Heart left ventricle (tissue), 16 donors: ENCODE measurements at regions of chr5 and their contacts with region 1.

Region 1: DNA sequence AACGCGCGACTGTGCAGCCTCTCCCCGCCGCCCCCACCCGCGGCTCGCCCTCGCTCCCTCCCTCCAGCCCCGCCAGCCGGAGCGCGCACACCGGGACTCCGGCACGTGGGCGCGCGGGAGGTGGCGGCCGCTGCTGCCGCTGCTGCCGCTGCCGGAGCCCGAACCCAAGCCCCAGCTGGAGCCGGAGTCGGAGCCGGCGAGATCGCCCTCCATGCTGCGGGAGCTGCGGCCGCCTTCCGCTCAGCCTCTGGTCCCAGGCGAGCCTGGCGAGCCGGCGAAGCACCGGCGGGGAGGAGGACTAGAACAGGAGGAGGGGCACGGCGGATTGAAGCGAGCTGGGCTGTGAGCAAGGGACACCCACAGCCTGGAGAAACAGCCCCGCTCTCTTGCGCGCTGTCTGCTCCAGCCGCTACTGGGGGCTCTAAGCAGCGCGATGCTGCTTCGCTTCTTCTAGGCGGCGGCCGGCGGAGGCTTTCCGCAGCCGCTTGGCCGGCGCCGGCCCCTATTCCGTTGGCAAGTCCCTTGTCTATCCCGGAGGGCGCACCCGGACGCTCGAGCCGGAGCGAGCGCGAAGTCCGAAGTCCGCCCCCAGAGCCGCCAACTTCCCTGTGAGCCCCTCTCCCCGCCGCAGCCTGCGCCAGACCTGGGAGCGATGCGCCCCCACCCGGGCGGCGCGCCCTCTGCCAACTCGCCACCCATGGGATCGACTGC is 598.7 kb upstream of the SGCD start:
- DNase-seq: peak; percentile 44 to 79 (median 70)
- ATAC-seq: peak; percentile 57 to 83 (median 75)
- H3K4me3 ChIP-seq: peak overlapping the region; percentile 5 to 64 (median 59)
- H3K27ac ChIP-seq: peak overlapping the region in 11 of 12 donors; percentile 72 to 89 (median 85)
- H3K4me1 ChIP-seq: peaks cover 0 to 28% (median 6%) of the 10 kb centered on the region in 12 donors
- H3K27me3 ChIP-seq: peaks cover 0 to 49% (median 16%) of the 10 kb centered on the region in 9 donors
- CTCF ChIP-seq: peak in 6 of 12 donors; percentile 11 to 49 (median 28)
- POLR2A ChIP-seq: no peak

Region 2: DNA sequence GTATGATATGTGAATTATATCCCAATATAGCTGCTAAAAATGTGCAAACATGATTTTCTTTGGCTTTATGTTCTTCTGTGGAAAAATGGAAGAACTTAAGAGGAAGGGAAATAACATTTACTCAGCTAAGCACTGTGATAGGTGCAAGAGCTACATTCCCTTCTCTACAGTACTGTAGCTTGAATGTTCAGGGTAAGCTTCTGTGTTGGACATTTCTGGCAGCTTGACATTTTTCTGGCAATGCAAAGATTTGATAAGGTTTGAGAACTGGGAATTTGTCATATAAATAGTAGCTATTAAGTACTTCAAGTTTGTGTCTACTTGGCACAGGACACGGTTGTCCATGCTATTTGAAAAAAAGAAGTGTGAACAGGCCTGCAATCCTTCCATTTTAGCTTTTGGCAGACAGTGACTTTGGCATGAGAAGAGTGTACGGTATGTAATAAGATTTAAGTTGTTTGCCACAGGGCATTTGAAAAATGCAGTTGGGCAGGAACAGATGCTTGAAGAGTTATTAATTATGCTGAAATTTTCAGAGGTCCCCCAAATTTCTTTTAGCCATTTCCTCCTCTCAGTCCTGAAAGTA is 637.1 kb before region 1 on chr5:
- intact Hi-C with region 1: loop called in 2 of 10 experiments (anchors 5 kb)
- DNase-seq: peak in 4 of 5 donors; percentile 36 to 45 (median 38)
- ATAC-seq: peak; percentile 79 to 90 (median 85)
- H3K4me3 ChIP-seq: no peak overlapping the region
- H3K27ac ChIP-seq: peak overlapping the region; percentile 2 to 89 (median 64)
- H3K4me1 ChIP-seq: peaks cover 0 to 29% (median 8%) of the 10 kb centered on the region in 12 donors
- H3K27me3 ChIP-seq: no peaks in the 10 kb centered on the region
- CTCF ChIP-seq: no peak
- POLR2A ChIP-seq: no peak

Region 3: DNA sequence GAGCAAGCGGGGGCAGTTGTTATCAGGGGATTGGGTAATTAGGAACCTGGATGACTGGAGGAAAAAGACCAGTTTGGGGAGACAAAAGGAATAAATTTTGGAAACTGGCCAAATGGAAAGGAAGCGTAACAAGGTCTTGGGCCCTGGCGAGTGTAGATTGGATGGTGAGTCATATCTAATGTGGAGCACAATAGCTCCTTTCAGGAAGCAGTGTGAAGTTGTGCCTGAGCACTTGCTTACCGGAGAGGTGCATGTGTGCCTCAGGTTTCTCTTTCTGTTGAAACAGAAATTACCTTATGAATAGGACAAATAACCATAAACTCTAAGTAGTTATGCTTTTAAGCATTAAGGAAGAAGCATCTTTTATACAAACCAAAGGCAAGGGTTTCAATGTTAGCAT is 538.3 kb before region 1 on chr5:
- intact Hi-C with region 1: loop called in 3 of 10 experiments (anchors 5 kb)
- DNase-seq: no peak
- ATAC-seq: no peak
- H3K4me3 ChIP-seq: no peak overlapping the region
- H3K27ac ChIP-seq: no peak overlapping the region
- H3K4me1 ChIP-seq: peaks cover 0 to 22% (median 0%) of the 10 kb centered on the region in 12 donors
- H3K27me3 ChIP-seq: no peaks in the 10 kb centered on the region
- CTCF ChIP-seq: no peak
- POLR2A ChIP-seq: no peak

Region 4: DNA sequence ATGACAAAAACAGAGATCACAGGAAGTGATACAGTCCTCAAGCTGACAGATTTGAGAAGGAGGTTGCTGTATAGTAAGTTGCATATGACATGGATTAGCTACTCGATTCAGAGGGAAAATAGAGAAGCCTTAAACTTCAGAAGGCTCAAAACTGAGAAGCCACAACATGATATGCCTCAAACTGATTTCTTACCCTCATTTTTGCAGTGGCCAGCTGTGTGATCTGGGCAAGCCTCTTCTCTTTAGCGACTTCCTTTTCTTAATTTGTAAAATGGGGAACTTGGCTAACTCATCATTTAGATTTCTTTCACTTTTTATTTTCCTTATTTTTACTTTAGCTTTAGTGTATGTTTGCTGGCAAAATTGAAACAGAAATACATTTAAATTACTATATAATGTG is 293.6 kb before region 1 on chr5:
- intact Hi-C with region 1: no loop called
- DNase-seq: no peak
- ATAC-seq: no peak
- H3K4me3 ChIP-seq: no peak overlapping the region
- H3K27ac ChIP-seq: peak overlapping the region in 1 of 12 donors; percentile 50
- H3K4me1 ChIP-seq: no peaks in the 10 kb centered on the region
- H3K27me3 ChIP-seq: no peaks in the 10 kb centered on the region
- CTCF ChIP-seq: no peak
- POLR2A ChIP-seq: no peak

Region 5: GRCh38 chr5:155616779-155617392 is 111.4 kb before region 1 on chr5:
- intact Hi-C with region 1: loop called in 1 of 10 experiments (anchors 10 kb)
- DNase-seq: peak in 2 of 5 donors; percentile 31 to 65
- ATAC-seq: peak in 2 of 4 donors; percentile 37 to 60
- H3K4me3 ChIP-seq: no peak overlapping the region
- H3K27ac ChIP-seq: no peak overlapping the region
- H3K4me1 ChIP-seq: peaks cover 0 to 6% (median 0%) of the 10 kb centered on the region in 12 donors
- H3K27me3 ChIP-seq: no peaks in the 10 kb centered on the region
- CTCF ChIP-seq: peak; percentile 33 to 65 (median 54)
- POLR2A ChIP-seq: no peak